Posterior cingulate gyrus (tissue), 11 donors: ENCODE measurements at regions of chr5 and their contacts with region 1.

Region 1: DNA sequence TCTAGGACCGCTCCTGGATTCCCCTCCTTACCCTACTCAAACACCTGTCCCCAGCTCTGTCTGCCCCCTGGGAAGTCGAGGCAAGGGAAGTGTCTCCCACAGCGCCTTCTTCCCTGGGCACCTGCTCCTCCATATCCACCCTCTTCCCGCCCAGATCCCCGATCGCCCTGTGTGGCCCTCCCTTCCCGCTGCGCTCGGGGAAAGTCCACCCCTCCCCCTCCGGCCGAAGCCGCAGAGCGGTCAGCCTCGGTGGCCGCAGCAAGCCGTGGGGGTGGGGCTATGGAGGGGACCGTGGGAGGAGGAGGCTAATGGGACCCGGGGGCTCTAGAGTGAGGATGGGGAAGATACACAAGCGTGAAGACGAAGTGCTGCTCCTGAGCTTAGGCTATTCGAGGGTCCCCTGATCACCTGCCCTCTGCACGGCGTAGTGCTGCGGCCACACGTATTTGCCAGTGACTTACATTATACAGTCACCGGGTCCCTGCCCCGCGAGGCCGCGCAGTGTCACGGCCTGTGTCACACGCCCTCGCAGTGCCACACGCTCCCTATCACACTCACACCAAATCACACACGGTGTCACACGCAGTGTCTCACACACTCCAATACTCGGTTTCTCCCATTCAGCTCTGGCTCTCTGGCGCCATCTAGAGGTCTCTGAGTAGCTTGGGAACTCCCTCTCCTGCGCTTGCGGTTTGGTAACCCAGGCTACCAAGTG is 658 bp upstream of the PCDH1 start:
- DNase-seq: peak; percentile 86 to 98 (median 94)

Region 2: DNA sequence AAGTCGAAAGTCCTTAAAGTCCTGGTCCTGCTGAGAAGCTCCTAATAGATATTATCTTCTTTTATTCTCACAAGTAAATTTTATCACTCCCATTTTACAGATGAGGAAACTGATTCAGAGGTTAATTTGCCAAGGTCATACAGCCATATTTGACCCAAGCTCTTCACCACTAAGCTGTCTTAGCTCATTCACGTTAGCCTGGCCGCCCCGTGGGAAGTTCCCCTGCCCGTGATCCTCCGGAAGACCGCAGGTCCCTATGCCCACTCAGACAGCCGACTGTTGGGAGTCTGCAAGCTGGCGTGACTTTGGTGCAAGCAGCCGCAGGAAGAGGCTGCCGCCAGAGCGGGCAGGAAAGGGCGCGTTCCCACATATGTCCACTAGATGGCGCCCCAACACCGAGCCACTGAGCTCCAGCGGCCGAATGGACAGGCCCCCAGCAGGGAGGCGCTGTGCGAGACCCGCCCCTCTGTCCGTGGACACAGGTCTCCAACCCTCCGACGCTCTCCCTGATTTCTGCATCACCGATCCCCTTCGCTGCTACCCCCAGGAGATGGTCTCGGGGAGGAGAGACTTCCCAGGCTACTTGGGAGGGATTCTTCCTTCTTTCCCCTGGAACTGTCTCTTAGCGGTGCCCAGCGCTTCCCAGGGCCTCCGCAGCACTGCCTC is 186.9 kb before region 1 on chr5:
- intact Hi-C with region 1: loop called (anchors 2 kb)
- DNase-seq: peak; percentile 80 to 98 (median 91)

Region 3: GRCh38 chr5:141701360-141702119 is 177.3 kb before region 1 on chr5:
- intact Hi-C with region 1: loop called (anchors 1 kb)
- DNase-seq: peak in 3 of 10 donors; percentile 78 to 85 (median 84)

Region 4: GRCh38 chr5:141747152-141748141 is 131.4 kb before region 1 on chr5:
- intact Hi-C with region 1: loop called (anchors 2 kb)
- DNase-seq: peak; percentile 95 to 99 (median 96)

Region 5: DNA sequence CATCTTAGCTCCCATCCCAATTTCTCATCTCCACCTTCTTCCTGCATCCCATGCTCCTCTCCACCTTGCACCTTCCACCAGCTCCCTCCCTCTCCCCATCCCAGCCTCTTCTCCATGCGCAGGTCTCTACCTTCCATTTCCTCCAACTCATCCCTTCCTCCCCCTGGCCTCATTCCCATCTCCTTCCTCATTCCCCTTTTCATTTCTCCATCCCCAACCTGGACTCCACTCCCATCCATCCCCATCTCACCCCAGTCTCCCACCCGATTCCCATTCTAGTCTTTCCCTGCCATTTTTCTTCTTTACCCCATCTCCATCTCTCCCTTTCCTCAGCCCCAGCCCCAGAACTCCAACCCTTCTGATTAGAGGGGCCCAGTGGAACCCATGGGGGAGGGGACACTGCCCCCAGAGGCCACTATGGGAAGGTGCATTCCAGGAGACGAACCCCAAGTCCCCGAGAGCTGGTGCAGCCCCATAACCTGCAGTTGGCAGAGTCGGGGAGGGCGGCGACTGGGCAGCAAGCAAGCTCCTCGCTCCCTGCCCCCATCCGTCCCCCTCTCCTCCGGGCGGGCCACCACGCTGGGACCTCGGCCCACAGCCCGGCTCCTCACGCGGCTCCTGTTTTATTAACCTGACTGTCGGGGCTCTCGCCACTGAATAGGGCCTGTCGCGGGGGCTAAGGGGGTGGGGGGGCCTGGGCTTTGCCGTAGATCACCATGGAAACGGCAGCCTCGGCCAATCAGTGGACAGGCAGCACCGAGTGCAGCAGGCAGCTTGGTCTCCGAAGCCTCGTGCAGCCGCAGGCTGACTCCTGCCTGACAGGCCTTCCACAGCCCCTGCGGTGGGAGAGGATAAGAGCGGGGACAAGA is 67.3 kb before region 1 on chr5:
- intact Hi-C with region 1: loop called (anchors 5 kb)
- DNase-seq: peak in 9 of 10 donors; percentile 47 to 95 (median 73)

Region 6: GRCh38 chr5:141923448-141924352 is 44.8 kb after region 1 on chr5 and contains the start of gene DELE1:
- intact Hi-C with region 1: loop called (anchors 5 kb)
- DNase-seq: peak; percentile 89 to 99 (median 94)

Region 7: DNA sequence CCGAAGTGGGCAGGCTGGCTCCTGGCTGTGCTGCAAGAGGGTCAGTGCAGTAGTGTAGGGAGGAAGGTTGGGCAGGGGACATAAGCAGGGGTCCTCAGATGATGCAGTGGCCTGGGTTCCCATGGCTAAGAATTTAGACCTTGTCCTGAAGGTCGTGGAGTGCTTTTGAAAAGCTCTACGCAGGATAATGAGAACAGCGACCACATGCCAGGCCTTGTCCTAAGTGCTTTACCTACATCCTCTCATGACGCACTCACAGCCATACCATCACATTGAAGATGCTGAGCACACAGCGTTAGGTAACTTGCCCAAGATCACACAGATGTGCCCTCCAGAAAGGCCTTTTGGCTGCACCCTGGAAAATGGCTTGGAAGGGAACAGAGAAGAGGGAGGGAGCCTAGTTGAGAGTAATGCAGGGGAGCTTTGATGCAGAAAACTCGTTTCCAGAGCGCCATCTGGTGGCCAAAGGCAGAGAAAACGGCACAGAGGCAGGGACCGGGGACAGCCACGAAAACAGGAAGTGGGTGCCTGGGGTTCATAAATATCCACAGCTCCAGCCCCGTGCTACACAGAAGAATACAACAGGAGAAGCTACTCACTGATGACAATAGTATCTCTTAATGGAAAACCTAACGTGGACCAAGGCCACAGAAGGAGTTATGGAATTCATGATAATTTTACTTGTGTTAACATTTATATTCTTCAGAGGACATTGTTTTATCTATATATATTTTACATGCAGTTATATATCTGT is 81.8 kb after region 1 on chr5:
- intact Hi-C with region 1: loop called (anchors 5 kb)
- DNase-seq: peak; percentile 80 to 98 (median 92)

Region 8: GRCh38 chr5:142032747-142033631 is 154.1 kb after region 1 on chr5:
- intact Hi-C with region 1: no loop called
- DNase-seq: no peak